ENCODE measurements at regions of chr17 and their contacts with region 1.

Region 1: GRCh38 chr17:56707312-56708219 is 114.1 kb downstream of the NOG start:
- DNase-seq: no peak
- ATAC-seq: no peak
- H3K4me3 ChIP-seq: no peak overlapping the region
- H3K4me3 Mint-ChIP-seq: no peak overlapping the region
- H3K27ac ChIP-seq: no peak overlapping the region
- H3K27ac Mint-ChIP-seq: no peak overlapping the region
- H3K4me1 ChIP-seq: no peaks in the 10 kb centered on the region
- H3K4me1 Mint-ChIP-seq: no peaks in the 10 kb centered on the region
- H3K27me3 ChIP-seq: no peaks in the 10 kb centered on the region
- H3K27me3 Mint-ChIP-seq: peaks cover 11% of the 10 kb centered on the region
- CTCF ChIP-seq: no peak

Region 2: GRCh38 chr17:56966338-56966737 is 258.8 kb after region 1 on chr17:
- CTCF ChIA-PET with region 1: no interaction called
- POLR2A ChIA-PET with region 1: no interaction called
- intact Hi-C with region 1: loop called in 1 of 2 experiments (anchors 5 kb)
- DNase-seq: no peak
- ATAC-seq: no peak
- H3K4me3 ChIP-seq: no peak overlapping the region
- H3K4me3 Mint-ChIP-seq: no peak overlapping the region
- H3K27ac ChIP-seq: no peak overlapping the region
- H3K27ac Mint-ChIP-seq: no peak overlapping the region
- H3K4me1 ChIP-seq: no peaks in the 10 kb centered on the region
- H3K4me1 Mint-ChIP-seq: no peaks in the 10 kb centered on the region
- H3K27me3 ChIP-seq: no peaks in the 10 kb centered on the region
- H3K27me3 Mint-ChIP-seq: no peaks in the 10 kb centered on the region
- CTCF ChIP-seq: no peak